ENCODE measurements at regions of chr7 and their contacts with region 1.

Region 1: DNA sequence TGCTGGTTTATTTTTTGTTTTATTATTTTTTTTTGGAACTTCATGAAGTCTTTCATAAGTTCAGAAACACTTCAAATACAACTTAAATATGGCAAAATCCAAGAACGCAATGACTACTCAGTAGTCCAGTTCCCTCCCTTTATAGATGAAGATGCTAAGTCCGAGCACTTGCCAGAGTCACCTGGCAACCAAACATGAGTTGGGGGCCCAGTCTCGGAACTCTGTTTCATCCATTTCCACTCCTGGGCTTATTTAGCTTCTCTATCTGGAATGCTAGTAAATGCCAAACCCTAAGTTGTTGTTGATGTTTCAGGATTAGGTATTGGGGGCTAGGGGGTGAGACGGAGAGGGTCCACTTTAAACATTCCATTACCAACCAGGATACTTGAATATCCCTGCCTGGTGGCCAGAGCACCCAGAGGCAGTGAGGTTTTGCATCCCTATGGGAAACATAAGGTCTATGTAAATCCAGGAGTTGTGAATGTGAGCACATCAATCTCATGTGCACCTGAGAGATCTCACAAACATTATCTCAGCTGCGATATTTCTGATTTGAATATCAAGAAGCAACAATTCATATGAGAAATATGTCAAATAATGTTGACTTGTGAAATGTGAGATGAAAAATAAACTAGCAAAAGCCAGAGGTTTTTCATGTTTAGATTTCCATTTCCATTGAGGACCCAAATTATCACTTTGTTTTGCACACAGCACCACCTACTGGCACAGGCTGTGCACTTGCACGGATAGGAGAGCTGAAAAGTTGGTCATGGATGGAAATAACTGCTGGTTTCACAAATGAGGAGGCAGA is 129.3 kb downstream of the PKD1L1 start:
- DNase-seq: peak in 7 of 10 donors; percentile 51 to 93 (median 72)

Region 2: GRCh38 chr7:47266131-47266706 is 552.8 kb before region 1 on chr7:
- intact Hi-C with region 1: loop called (anchors 1 kb)
- DNase-seq: peak in 7 of 10 donors; percentile 56 to 95 (median 68)

Region 3: DNA sequence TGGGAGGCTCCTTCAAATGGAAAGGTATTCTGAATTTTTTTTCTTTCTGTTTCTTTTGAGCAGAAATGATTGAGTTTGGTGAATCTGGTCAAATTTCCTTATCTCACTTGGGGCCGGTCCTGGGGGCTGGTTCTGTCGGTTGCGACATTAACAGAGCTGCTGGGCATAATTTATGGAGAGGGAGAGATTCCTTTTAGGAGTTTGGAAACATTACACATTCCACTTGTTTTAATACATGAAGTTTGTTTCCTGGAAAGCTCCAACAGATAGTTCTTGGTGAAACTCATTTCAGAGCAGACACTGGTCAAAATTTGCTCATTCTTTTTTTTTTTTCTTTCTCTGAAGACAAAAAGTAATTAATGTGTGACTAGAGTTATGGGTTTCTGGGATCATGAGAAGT is 482.2 kb after region 1 on chr7:
- intact Hi-C with region 1: no loop called
- DNase-seq: no peak